Motor neuron (in vitro differentiated cells): ENCODE measurements at regions of chr6 and their contacts with region 1.

Region 1: GRCh38 chr6:161393839-161394364 is 120.0 kb upstream of the AGPAT4 start:
- ATAC-seq: peak; percentile 92 to 99 (median 96)
- H3K4me3 ChIP-seq: no peak overlapping the region
- H3K27ac ChIP-seq: no peak overlapping the region
- H3K4me1 ChIP-seq: peaks cover 14 to 40% of the 10 kb centered on the region in 2 donors

Region 2: GRCh38 chr6:160733050-160733646 is 660.8 kb before region 1 on chr6:
- in situ Hi-C with region 1: loop called in 1 of 9 experiments (anchors 25 kb)
- ATAC-seq: peak; percentile 66 to 98 (median 84)
- H3K4me3 ChIP-seq: no peak overlapping the region
- H3K27ac ChIP-seq: no peak overlapping the region
- H3K4me1 ChIP-seq: no peaks in the 10 kb centered on the region

Region 3: DNA sequence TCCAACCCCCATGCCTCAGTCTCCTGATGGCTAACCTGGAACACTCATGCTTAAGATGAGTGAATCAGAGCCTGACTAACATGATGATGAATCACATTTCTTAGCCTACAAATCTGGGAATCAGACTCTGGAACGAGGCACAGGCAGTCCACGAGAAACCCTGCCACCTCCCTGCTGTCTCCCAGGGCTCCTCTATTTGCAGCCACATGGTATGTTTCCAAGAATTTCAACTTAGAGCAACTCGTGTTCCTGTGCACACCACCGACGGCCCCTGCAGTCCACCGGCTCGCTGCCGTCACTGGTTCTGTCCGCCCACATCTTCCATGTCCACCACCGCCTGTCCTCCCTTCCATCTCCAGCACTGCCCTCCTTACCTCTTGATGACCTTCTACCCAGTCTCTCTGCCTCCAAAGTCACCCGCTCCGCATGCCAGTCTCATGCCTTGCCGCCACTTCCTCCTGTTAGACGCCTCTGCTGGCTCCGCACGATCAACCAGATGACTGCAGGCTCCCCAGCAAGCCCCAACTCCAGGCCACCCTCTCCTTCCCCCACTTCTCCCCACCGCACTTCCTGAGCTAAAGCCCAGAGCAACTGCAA is 207.6 kb before region 1 on chr6:
- in situ Hi-C with region 1: no loop called
- ATAC-seq: peak in 2 of 8 experiments; percentile 43 to 72
- H3K4me3 ChIP-seq: no peak overlapping the region
- H3K27ac ChIP-seq: no peak overlapping the region
- H3K4me1 ChIP-seq: no peaks in the 10 kb centered on the region